Left cardiac atrium (tissue), 4 donors: ENCODE measurements at regions of chr3 and their contacts with region 1.

Region 1: GRCh38 chr3:41881233-41881821 is 80.6 kb downstream of the ULK4 start:
- DNase-seq: no peak
- ATAC-seq: no peak

Region 2: DNA sequence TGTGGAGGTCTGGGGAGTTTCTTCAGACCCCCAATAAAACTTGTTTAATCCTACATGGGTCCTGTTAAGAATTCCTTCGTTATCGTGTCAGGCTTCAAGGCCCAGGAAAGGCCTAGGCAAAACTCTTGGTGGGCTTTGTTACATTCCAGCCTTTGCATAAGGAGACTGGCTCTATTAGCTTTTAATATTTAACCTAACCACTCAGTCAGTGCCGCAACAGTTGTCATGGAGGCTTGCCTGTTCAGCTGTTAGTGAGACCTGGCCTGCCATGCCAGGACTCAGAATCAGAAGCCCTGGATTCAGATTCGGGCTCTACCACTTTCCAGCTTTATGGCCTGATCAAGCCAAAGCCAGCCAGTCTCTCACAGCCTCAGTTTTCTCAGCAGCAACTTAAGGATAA is 1552.3 kb before region 1 on chr3:
- intact Hi-C with region 1: loop called in 1 of 2 experiments (anchors 5 kb)
- DNase-seq: no peak
- ATAC-seq: no peak

Region 3: DNA sequence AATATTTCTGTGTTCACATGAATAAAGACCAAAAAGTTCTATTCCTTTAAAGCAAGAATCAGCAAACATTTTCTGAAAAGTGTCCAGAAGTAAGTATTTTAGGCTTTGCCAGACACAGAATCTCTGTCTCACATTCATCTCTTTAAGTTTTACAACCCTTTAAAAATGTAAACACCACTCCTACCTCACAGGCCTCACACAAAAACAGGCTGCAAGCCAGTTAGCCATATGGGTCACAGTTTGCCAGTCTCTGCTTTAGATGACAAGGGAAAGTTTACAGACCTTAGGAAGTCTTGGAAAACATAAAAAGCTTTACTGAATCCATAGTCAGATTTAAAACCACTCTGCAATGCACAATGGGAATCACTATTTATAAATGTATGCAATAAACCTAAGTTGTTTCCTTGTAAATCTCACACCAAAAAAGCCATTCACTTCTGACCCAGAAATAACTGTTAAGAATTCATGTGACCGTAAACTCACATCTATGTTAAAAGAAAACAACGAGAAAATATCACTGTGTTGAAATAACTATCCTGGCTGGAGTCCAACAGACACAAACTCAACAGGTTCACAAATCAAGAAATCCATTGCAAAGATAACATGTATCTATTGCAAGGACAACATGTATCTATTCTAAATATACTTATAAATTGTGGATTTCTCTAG is 227.6 kb before region 1 on chr3:
- intact Hi-C with region 1: no loop called
- DNase-seq: no peak
- ATAC-seq: no peak